ENCODE measurements at regions of chr5 and their contacts with region 1.

Region 1: GRCh38 chr5:902129-902916 is 9.6 kb downstream of the TRIP13 start:
- DNase-seq: no peak
- ATAC-seq: no peak
- H3K4me3 ChIP-seq: no peak overlapping the region
- H3K4me3 Mint-ChIP-seq: no peak overlapping the region
- H3K27ac ChIP-seq: no peak overlapping the region
- H3K27ac Mint-ChIP-seq: no peak overlapping the region
- H3K4me1 ChIP-seq: no peaks in the 10 kb centered on the region
- H3K4me1 Mint-ChIP-seq: no peaks in the 10 kb centered on the region
- H3K27me3 ChIP-seq: no peaks in the 10 kb centered on the region
- H3K27me3 Mint-ChIP-seq: no peaks in the 10 kb centered on the region

Region 2: DNA sequence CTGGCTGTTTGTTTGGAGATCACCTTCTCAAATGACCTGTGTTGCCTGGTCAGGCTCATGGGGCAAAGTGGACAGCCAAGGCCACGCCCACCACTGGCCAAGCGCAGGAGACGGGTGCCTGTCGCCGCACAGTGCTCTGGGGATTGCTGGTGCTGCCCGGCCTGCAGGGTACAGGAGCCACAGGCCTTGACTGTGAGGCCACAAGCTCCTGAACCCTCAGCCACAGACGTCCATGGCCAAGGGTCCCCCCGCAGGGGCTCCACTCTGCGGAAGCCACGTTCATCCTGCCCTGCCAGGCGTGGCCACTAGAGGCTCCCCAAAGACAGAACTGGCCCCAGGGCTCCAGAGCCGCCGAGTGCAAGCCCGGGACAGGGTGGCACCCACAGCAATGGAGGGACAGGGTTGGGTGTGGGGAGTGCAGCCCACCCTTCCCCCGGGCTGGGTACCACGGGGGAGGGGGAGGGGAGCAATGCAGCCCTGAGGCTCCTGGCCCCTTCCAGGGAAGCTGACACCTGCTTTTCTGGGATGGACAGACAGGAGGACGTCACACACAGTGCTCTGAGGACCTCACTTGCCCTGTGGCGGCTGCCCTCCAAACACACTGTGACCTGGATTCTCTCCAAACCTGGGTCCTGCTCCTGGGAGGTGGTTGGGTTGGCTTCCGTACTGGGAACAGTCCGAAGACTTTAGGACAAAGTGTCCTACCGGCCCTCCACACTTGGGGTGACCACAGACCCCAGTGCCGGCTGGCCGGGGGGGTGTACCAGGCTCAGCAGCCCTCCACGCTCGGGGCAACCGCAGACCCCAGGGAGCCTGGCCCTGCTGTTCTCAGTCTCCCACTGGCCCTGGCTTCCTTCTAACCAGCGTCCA is 230.6 kb before region 1 on chr5:
- CTCF ChIA-PET with region 1: interaction called, 8 read pairs
- POLR2A ChIA-PET with region 1: no interaction called
- intact Hi-C with region 1: loop called (anchors 1 to 2 kb)
- DNase-seq: peak; percentile 48 to 73 (median 65)
- ATAC-seq: peak; percentile 77
- H3K4me3 ChIP-seq: peak overlapping the region; percentile 24
- H3K4me3 Mint-ChIP-seq: peak overlapping the region in 2 of 10 donors; percentile 63 to 78
- H3K27ac ChIP-seq: no peak overlapping the region
- H3K27ac Mint-ChIP-seq: peak overlapping the region in 1 of 9 donors; percentile 56
- H3K4me1 ChIP-seq: peaks cover 17 to 22% of the 10 kb centered on the region in 2 donors
- H3K4me1 Mint-ChIP-seq: peaks cover 0 to 17% (median 12%) of the 10 kb centered on the region in 7 donors
- H3K27me3 ChIP-seq: no peaks in the 10 kb centered on the region
- H3K27me3 Mint-ChIP-seq: peaks cover 0 to 8% (median 7%) of the 10 kb centered on the region in 5 donors